Activated CD4-positive, alpha-beta T cell treated with anti-CD3 and anti-CD28 coated beads for 36 hours (primary cell): ENCODE measurements at regions of chr22 and their contacts with region 1.

Region 1: GRCh38 chr22:38569972-38570778 is at the start of gene DMC1:
- DNase-seq: peak; percentile 100
- ATAC-seq: peak; percentile 94
- H3K4me3 Mint-ChIP-seq: peak within 1 kb of the TSS; percentile 95
- H3K27ac Mint-ChIP-seq: peak within 1 kb of the TSS; percentile 97
- H3K4me1 Mint-ChIP-seq: peaks cover 16% of the 10 kb centered on the region
- H3K27me3 Mint-ChIP-seq: no peaks in the 10 kb centered on the region
- total RNA-seq, gene DMC1: 16.3 to 18.9 TPM

Region 2: GRCh38 chr22:37849089-37849751 is 721.0 kb before region 1 on chr22 and contains the start of gene EIF3L:
- CTCF ChIA-PET with region 1: no interaction called
- POLR2A ChIA-PET with region 1: no interaction called
- intact Hi-C with region 1: loop called in 1 of 2 experiments (anchors 1 kb)
- DNase-seq: peak; percentile 94
- ATAC-seq: peak; percentile 74
- H3K4me3 Mint-ChIP-seq: peak within 1 kb of the TSS; percentile 90
- H3K27ac Mint-ChIP-seq: peak within 1 kb of the TSS; percentile 96
- H3K4me1 Mint-ChIP-seq: peaks cover 47% of the 10 kb centered on the region
- H3K27me3 Mint-ChIP-seq: no peaks in the 10 kb centered on the region
- total RNA-seq, gene EIF3L: 632 to 670 TPM

Region 3: GRCh38 chr22:38056969-38057891 is 512.9 kb before region 1 on chr22 and contains the start of gene PICK1:
- CTCF ChIA-PET with region 1: interaction called, 10 read pairs
- POLR2A ChIA-PET with region 1: no interaction called
- intact Hi-C with region 1: loop called (anchors 1 to 10 kb)
- DNase-seq: peak; percentile 92
- ATAC-seq: peak; percentile 93
- H3K4me3 Mint-ChIP-seq: peak within 1 kb of the TSS; percentile 88
- H3K27ac Mint-ChIP-seq: peak within 1 kb of the TSS; percentile 98
- H3K4me1 Mint-ChIP-seq: peaks cover 15% of the 10 kb centered on the region
- H3K27me3 Mint-ChIP-seq: no peaks in the 10 kb centered on the region
- total RNA-seq, gene PICK1: 14.9 to 17.2 TPM

Region 4: GRCh38 chr22:38398609-38399461 is 171.3 kb before region 1 on chr22:
- CTCF ChIA-PET with region 1: interaction called, 3 read pairs
- POLR2A ChIA-PET with region 1: no interaction called
- intact Hi-C with region 1: loop called (anchors 1 to 5 kb)
- DNase-seq: peak; percentile 92
- ATAC-seq: peak; percentile 67
- H3K4me3 Mint-ChIP-seq: peak overlapping the region; percentile 72
- H3K27ac Mint-ChIP-seq: peak overlapping the region; percentile 47
- H3K4me1 Mint-ChIP-seq: peaks cover 38% of the 10 kb centered on the region
- H3K27me3 Mint-ChIP-seq: no peaks in the 10 kb centered on the region

Region 5: GRCh38 chr22:38656256-38657044 is 86.3 kb after region 1 on chr22 and contains the starts of genes CBY1 and FAM227A:
- CTCF ChIA-PET with region 1: no interaction called
- POLR2A ChIA-PET with region 1: no interaction called
- intact Hi-C with region 1: loop called in 1 of 2 experiments (anchors 1 kb)
- DNase-seq: peak; percentile 89
- ATAC-seq: peak; percentile 83
- H3K4me3 Mint-ChIP-seq: peak within 1 kb of the TSS; percentile 79
- H3K27ac Mint-ChIP-seq: peak within 1 kb of the TSS; percentile 93
- H3K4me1 Mint-ChIP-seq: peaks cover 11% of the 10 kb centered on the region
- H3K27me3 Mint-ChIP-seq: no peaks in the 10 kb centered on the region
- total RNA-seq, gene CBY1: 9.8 to 11.6 TPM
- total RNA-seq, gene FAM227A: 0.30 to 0.63 TPM

Region 6: GRCh38 chr22:38793721-38794466 is 223.7 kb after region 1 on chr22 and contains the start of gene DNAL4:
- CTCF ChIA-PET with region 1: no interaction called
- POLR2A ChIA-PET with region 1: interaction called, 3 read pairs
- intact Hi-C with region 1: loop called in 1 of 2 experiments (anchors 1 kb)
- DNase-seq: peak; percentile 94
- ATAC-seq: peak; percentile 98
- H3K4me3 Mint-ChIP-seq: peak within 1 kb of the TSS; percentile 84
- H3K27ac Mint-ChIP-seq: peak within 1 kb of the TSS; percentile 67
- H3K4me1 Mint-ChIP-seq: peaks cover 26% of the 10 kb centered on the region
- H3K27me3 Mint-ChIP-seq: no peaks in the 10 kb centered on the region
- total RNA-seq, gene DNAL4: 7.4 to 8.0 TPM